Posterior cingulate gyrus (tissue), 11 donors: ENCODE measurements at regions of chr17 and their contacts with region 1.

Region 1: GRCh38 chr17:59106463-59107305 is at the start of gene TRIM37:
- DNase-seq: peak; percentile 94 to 99 (median 96)

Region 2: GRCh38 chr17:59155439-59156182 is 48.9 kb after region 1 on chr17 and contains the start of gene PRR11:
- intact Hi-C with region 1: loop called (anchors 2 kb)
- DNase-seq: peak; percentile 91 to 99 (median 95)

Region 3: DNA sequence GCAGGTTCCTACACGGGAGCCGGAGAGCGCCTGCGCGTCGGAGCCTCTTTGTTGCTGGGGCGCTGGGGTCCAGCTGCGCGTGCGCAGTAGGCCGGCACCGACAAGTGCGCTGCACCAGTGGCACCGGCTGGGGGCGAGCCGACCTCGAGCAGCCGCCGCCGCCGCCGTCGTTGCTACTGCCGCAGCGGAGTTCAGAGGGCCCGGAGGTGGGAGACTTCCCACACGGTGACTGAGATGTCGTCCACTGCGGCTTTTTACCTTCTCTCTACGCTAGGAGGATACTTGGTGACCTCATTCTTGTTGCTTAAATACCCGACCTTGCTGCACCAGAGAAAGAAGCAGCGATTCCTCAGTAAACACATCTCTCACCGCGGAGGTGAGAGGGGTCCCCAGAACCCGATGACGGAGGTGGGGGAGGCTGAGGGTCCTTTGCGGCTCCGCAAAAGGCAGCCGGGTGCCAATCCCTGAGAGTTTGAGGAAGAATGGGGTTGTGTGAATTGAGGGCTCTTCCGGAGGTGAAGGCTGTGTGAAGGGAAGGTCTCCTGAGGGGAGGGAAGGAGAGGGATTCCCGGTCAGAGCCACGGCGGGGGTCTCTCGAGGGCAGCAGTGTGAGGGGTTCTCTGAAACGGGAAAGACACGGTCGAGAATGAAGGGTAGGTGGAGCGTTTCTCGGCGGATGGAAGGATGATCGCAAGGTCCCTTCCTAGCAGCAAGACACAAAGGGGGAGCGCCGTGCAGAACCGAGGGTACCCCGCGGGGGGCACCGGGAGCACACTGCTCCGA is 113.9 kb after region 1 on chr17 and contains the start of gene GDPD1:
- intact Hi-C with region 1: loop called (anchors 10 kb)
- DNase-seq: peak; percentile 90 to 99 (median 96)

Region 4: DNA sequence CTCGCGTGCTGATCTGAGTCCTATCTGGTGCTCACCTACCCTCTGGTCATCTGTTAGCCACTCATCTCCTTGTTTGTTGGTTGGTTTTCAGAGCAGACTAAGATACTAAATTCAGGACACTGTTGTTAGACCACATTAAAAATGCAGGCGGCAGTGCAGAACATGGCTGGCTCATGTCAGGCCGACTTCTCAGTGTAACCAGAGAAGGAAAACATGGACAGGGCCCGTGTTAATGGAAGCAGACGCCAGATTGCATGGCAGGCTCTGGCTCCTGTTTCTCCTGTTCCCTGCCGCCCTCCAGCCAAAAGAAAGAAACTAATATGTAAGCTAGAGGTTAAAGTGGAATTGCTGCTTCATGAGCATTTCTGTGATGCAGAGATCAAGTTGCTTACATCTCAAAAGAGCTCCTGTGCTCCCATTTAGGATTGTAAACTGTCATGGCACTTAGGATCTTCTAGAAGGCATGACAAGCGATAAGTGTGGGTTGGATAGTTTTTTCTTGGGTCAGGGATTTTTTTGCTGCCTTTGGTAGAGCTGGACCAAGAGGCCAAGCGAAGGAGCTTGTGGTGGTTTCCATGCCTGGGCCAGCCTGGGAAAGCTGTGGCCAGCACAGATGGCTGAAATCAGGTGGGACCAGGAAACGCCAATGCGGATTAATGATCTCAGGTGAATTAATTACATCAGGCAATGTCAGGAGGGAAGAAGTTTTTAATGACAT is 280.8 kb after region 1 on chr17:
- intact Hi-C with region 1: no loop called
- DNase-seq: no peak